IMR-90 (cell line): ENCODE measurements at regions of chr10 and their contacts with region 1.

Region 1: DNA sequence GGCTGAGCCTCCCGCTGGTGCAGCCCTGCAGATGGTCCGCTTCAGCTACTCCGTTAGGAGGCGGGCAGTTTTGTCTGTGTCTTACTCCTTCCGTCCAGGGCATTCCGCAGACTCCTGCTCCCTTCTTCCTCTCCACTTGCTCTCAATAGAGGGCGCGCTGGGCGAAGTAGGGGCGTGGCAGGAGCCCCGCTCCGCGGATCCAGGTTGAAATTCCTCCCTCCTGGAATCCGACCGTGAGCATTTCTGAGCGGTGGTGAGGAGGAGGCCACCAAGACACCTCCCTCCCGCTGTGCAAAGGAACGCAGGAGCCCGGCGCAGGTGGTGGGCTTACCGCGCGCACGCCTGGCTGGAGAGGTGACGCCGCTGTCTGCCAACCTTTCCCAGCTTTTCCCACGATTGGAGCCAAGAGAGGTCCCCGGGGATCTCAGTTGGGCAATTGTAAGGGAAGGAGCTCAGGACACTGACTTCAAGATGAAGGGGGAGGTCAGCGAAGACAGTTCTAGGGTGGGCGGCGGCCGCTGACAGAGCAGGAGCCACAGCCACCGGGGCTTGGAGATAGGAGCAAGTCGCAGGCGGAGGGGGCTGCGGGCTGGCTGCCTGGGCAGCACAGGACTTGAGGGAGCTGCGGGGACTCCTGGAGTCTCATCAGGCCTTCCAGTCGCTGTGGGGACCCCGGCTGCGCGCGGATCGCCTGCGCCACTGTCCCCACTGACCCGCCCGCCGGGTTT is 1011.3 kb downstream of the XPNPEP1 start:
- DNase-seq: peak; percentile 51
- ATAC-seq: peak; percentile 98
- H3K4me3 ChIP-seq: peak overlapping the region; percentile 58
- H3K27ac ChIP-seq: no peak overlapping the region
- H3K4me1 ChIP-seq: no peaks in the 10 kb centered on the region
- H3K27me3 ChIP-seq: peaks cover 2% of the 10 kb centered on the region; the same call in 1 of the 2 replicates
- CTCF ChIP-seq: peak; percentile 57
- POLR2A ChIP-seq: no peak
- RAD21 ChIP-seq: peak; percentile 52

Region 2: DNA sequence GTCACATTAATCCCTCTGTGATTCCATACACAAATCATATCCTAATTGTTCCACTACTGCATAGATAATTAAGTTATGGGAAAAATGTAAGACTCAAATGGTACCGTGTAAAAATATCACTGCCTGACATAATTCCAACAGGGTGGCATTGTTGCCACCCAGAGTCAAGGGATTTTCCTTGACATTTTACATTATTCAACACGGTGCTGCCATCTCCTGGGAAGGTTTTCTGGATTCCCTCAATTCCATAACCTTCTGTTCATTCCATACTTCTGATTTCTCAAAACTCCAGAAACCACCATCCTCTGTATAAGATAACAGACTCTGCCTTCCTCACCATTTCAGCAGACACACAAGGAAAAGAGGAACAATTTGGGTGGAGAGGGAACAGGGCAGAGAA is 515.4 kb after region 1 on chr10:
- CTCF ChIA-PET with region 1: no interaction called
- POLR2A ChIA-PET with region 1: no interaction called
- dilution Hi-C with region 1: no loop called
- in situ Hi-C with region 1: no loop called
- intact Hi-C with region 1: loop called (anchors 5 kb)
- DNase-seq: peak; percentile 51
- ATAC-seq: peak; percentile 62
- H3K4me3 ChIP-seq: no peak overlapping the region
- H3K27ac ChIP-seq: no peak overlapping the region
- H3K4me1 ChIP-seq: peaks cover 2% of the 10 kb centered on the region; the same call in 1 of the 2 replicates
- H3K27me3 ChIP-seq: no peaks in the 10 kb centered on the region
- CTCF ChIP-seq: peak; percentile 64
- POLR2A ChIP-seq: no peak
- RAD21 ChIP-seq: peak; percentile 76